Caco-2 (cell line): ENCODE measurements at regions of chr19 and their contacts with region 1.

Region 1: GRCh38 chr19:9796113-9796773 is 22.6 kb downstream of the FBXL12 start:
- DNase-seq: peak; percentile 84 to 85
- H3K4me3 ChIP-seq: no peak overlapping the region
- H3K4me3 Mint-ChIP-seq: no peak overlapping the region
- H3K27ac Mint-ChIP-seq: peak overlapping the region; percentile 22
- H3K4me1 ChIP-seq: no peaks in the 10 kb centered on the region; the same call in 1 of the 2 replicates
- H3K4me1 Mint-ChIP-seq: no peaks in the 10 kb centered on the region
- H3K27me3 ChIP-seq: no peaks in the 10 kb centered on the region
- H3K27me3 Mint-ChIP-seq: no peaks in the 10 kb centered on the region
- CTCF ChIP-seq: peak; percentile 70 to 73

Region 2: GRCh38 chr19:9140159-9140874 is 655.9 kb before region 1 on chr19 and contains the start of gene ZNF317:
- CTCF ChIA-PET with region 1: no interaction called
- POLR2A ChIA-PET with region 1: no interaction called
- intact Hi-C with region 1: loop called (anchors 1 kb)
- DNase-seq: peak; percentile 88 to 91
- H3K4me3 ChIP-seq: peak within 1 kb of the TSS; percentile 91
- H3K4me3 Mint-ChIP-seq: peak within 1 kb of the TSS; percentile 100
- H3K27ac Mint-ChIP-seq: peak within 1 kb of the TSS; percentile 100
- H3K4me1 ChIP-seq: 0 out of 2 replicates have a peak, but pooled peaks cover 7% of the 10 kb centered on the region
- H3K4me1 Mint-ChIP-seq: peaks cover 6% of the 10 kb centered on the region
- H3K27me3 ChIP-seq: no peaks in the 10 kb centered on the region
- H3K27me3 Mint-ChIP-seq: no peaks in the 10 kb centered on the region
- CTCF ChIP-seq: no peak
- total RNA-seq, gene ZNF317: 33.7 and 35.2 TPM in 2 replicates

Region 3: DNA sequence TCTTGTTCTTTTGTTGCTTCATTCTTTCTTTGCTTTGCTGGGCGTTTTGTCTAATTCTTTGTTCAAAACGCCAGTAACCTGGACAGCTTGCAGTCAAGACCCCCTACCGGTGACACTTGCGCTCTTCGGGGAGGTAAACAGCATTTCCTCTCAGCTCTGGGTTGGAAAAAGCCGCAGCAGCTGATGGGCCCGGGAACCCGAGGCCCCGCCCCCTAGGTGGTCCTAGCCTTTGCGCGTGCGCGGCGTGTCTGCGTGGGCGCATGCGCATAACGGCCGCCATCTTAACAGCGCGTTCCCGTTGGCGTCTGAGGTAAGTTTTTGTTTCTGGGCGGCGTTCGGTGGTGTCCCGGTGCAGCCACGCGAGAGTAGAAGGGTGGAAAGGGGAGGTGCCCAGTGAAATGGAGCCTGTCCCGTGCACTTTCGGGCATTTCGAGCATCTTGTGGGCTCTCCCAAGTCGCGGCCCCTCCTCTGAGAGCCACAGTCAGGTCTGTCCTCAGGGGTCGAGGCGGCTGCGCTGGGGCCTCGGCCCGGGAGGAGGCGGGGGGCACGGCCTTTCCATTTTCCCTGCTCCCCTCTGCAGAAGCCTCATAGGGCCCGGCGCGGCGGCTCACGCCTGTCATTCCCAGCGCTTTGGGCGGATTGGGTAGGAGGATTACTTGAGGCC is 472.2 kb before region 1 on chr19 and contains the start of gene ZNF559:
- CTCF ChIA-PET with region 1: no interaction called
- POLR2A ChIA-PET with region 1: no interaction called
- intact Hi-C with region 1: loop called (anchors 5 kb)
- DNase-seq: peak; percentile 88 to 91
- H3K4me3 ChIP-seq: peak within 1 kb of the TSS; percentile 44
- H3K4me3 Mint-ChIP-seq: peak within 1 kb of the TSS; percentile 80
- H3K27ac Mint-ChIP-seq: peak within 1 kb of the TSS; percentile 89
- H3K4me1 ChIP-seq: 0 out of 2 replicates have a peak, but pooled peaks cover 3% of the 10 kb centered on the region
- H3K4me1 Mint-ChIP-seq: no peaks in the 10 kb centered on the region
- H3K27me3 ChIP-seq: no peaks in the 10 kb centered on the region
- H3K27me3 Mint-ChIP-seq: no peaks in the 10 kb centered on the region
- CTCF ChIP-seq: peak in 1 of 2 experiments; percentile 28
- total RNA-seq, gene ZNF559: 5.4 and 5.5 TPM in 2 replicates

Region 4: DNA sequence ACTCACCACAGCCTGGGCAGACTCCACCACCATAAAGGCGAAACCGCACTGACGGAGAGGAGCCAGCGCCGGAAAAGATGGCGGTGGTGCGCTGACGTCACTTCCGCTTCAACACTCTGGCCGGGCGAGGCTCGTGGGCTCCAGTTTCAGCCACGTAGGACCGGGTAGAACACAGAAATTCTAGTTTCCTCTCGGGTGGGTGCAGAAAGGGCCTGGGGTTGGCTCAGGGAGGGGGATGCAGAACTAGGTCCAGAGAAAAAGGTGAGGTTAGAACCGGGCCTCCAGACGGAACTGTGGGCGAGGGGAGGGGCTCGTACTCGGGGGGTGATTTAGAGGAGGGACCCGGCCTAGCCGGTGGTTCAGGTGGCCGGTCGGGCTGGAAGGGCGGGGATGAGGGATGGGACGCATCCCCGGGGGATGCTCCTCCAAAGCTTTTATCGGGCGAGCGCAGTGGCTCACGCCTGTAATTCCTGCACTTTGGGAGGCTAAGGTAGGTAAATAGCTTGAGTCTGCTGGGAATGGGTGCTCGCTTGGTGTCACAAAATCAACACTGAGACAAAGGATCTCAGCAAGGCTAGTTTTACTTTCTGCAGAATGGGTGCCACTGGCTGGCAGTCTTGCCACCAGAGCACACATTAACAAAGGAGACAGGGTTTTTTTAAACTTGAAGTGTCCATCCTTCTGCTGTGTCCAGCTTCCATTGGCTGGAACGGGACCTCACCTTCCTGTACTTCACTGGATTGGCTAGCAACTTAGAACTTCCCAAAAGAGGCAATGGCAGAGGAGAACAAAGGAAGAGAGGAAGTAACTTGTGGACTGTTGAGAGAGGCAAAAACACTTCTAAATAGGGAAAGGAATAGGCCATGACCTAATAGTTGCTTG is 174.8 kb before region 1 on chr19 and contains the start of gene ZNF561:
- CTCF ChIA-PET with region 1: interaction called, 4 read pairs
- POLR2A ChIA-PET with region 1: no interaction called
- intact Hi-C with region 1: loop called (anchors 1 kb)
- DNase-seq: peak; percentile 80 to 84
- H3K4me3 ChIP-seq: peak within 1 kb of the TSS; percentile 71
- H3K4me3 Mint-ChIP-seq: peak within 1 kb of the TSS; percentile 96
- H3K27ac Mint-ChIP-seq: peak within 1 kb of the TSS; percentile 100
- H3K4me1 ChIP-seq: no peaks in the 10 kb centered on the region
- H3K4me1 Mint-ChIP-seq: peaks cover 7% of the 10 kb centered on the region
- H3K27me3 ChIP-seq: no peaks in the 10 kb centered on the region
- H3K27me3 Mint-ChIP-seq: no peaks in the 10 kb centered on the region
- CTCF ChIP-seq: no peak
- total RNA-seq, gene ZNF561: 23.7 and 27.4 TPM in 2 replicates

Region 5: DNA sequence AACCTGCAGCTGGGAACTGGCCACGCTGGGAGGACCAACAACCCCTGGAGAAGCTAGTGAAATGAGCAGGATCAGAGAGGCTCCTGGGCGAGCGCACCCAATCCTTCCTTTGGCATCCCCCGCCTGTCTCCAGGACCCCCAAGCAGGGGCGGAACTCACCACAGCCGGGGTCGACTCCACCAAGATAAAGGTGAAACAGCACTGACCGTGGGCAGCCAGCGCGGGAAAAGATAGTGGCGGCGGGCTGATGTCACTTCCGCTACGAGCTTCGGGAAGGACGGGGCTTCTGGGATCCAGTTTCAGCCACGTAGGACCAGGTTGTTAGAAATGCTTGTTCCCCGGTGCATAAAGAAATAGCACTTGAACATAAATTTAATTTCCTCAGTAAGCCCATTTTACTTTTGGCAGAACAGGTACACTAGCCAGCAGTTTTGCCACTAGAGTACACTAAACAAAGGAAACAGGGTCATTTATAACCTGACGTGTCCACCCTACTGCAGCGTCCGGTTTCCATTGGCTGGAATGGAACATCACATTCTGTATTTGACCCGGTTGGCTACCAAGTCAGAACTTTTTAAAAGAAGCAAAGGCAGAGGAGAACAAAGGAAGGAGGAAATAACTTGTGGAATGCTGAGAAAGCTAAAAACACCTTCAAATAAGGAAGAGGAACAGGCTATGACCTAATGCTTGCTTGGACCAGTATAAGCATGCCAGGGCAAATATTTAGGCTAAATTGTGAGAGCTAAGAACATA is 95.8 kb before region 1 on chr19:
- CTCF ChIA-PET with region 1: no interaction called
- POLR2A ChIA-PET with region 1: no interaction called
- intact Hi-C with region 1: no loop called
- DNase-seq: no peak
- H3K4me3 ChIP-seq: no peak overlapping the region
- H3K4me3 Mint-ChIP-seq: no peak overlapping the region
- H3K27ac Mint-ChIP-seq: no peak overlapping the region
- H3K4me1 ChIP-seq: 0 out of 2 replicates have a peak, but pooled peaks cover 5% of the 10 kb centered on the region
- H3K4me1 Mint-ChIP-seq: no peaks in the 10 kb centered on the region
- H3K27me3 ChIP-seq: no peaks in the 10 kb centered on the region
- H3K27me3 Mint-ChIP-seq: no peaks in the 10 kb centered on the region
- CTCF ChIP-seq: no peak

Region 6: DNA sequence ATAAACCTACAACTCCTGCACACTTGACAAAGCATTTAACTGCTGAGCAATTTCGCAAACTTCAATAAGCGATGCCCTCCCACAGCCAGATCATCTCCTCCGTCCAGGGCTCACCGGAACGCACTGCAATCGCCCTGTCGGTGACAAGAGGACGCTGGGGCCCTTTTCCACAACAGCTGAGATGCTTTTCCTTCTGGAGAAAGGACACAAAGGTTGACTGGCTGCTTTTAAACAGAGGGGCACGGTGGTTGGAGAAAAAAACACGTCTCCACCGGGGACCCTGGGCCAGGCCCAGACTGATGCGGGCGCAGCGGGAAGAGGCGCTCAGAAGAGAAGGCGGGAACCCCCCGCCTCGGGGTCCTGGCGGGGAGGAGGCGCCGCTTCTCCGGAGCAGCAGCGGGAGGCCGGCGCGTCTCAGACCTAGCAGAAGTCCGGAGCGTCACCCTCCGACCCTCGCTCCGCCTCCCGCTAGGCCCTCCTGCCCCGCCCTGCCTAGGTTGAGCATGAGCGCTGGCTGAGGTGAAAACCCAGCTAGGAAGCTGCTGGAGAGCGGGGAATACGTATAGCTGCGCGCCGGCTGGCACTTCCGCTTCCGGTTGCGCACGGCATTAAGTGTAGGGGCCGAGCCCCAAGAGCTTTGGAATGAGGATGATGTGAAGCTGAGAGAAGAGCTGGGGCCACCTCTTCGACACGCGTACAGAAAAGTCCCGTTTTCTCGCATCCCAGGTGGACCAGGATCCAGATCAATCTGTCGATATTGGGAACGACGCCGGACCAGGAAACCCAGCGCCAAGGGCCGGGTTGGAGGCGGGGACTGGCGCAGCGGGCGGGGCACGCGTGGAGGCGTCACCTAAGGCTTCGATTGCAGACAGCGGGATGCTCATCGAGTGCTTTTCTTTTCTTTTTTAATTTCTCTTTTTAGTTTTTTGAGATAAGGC is 27.8 kb before region 1 on chr19 and contains the start of gene ZNF846:
- CTCF ChIA-PET with region 1: no interaction called
- POLR2A ChIA-PET with region 1: interaction called, 3 read pairs
- intact Hi-C with region 1: loop called (anchors 1 kb)
- DNase-seq: peak; percentile 95 to 97
- H3K4me3 ChIP-seq: peak within 1 kb of the TSS; percentile 89
- H3K4me3 Mint-ChIP-seq: peak within 1 kb of the TSS; percentile 96
- H3K27ac Mint-ChIP-seq: peak within 1 kb of the TSS; percentile 96
- H3K4me1 ChIP-seq: no peaks in the 10 kb centered on the region
- H3K4me1 Mint-ChIP-seq: no peaks in the 10 kb centered on the region
- H3K27me3 ChIP-seq: no peaks in the 10 kb centered on the region
- H3K27me3 Mint-ChIP-seq: no peaks in the 10 kb centered on the region
- CTCF ChIP-seq: no peak
- total RNA-seq, gene ZNF846: 5.3 and 6.2 TPM in 2 replicates

Region 7: DNA sequence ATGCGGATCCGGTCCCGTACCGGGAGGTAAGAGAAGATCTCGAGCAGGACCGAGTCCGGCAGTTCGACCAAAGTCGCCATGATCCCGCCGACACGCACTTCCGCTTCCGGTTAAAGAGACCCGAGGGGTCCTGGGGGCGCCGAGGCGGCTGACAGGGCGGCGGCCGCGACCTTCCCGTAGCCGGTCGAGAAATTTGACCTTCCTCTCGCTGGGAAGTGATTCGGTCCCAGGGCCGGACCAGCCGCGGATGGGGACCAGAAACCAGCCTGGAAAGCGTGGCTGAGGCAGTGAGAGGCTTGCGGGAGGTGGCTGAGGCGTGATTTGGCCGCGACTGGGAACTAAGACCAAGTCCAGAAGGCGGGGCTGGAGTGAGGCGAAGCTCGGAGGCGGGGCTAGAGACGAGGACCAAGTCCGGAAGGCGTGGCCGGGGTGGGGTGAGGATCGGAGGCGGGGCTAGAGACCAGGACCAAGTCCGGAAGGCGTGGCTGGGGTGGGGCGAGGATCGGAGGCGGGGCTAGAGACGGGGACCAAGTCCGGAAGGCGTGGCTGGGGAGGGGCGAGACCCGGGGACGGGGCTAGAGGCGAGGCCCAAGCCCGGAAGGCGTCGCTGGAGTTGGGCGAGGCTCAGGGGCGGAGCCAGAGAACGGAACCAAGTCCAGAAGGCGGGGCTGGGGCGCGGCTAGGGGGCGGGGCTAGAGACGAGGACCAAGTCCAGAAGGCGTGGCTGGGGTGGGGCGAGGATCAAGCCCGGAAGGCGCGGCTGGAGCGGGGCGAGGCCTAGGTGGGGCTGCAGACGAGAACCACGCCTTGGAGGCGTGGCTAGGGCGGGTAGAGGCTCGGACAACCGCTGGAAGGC is 22.7 kb after region 1 on chr19 and contains the start of gene FBXL12:
- CTCF ChIA-PET with region 1: interaction called, 5 read pairs
- POLR2A ChIA-PET with region 1: no interaction called
- intact Hi-C with region 1: loop called (anchors 1 kb)
- DNase-seq: peak; percentile 99 to 100
- H3K4me3 ChIP-seq: peak within 1 kb of the TSS; percentile 73
- H3K4me3 Mint-ChIP-seq: peak within 1 kb of the TSS; percentile 90
- H3K27ac Mint-ChIP-seq: peak within 1 kb of the TSS; percentile 92
- H3K4me1 ChIP-seq: peaks cover 5% of the 10 kb centered on the region
- H3K4me1 Mint-ChIP-seq: peaks cover 5% of the 10 kb centered on the region
- H3K27me3 ChIP-seq: no peaks in the 10 kb centered on the region
- H3K27me3 Mint-ChIP-seq: no peaks in the 10 kb centered on the region
- CTCF ChIP-seq: no peak
- total RNA-seq, gene FBXL12: 37.6 and 39.9 TPM in 2 replicates

Region 8: GRCh38 chr19:9865732-9866501 is 69.7 kb after region 1 on chr19:
- CTCF ChIA-PET with region 1: no interaction called
- POLR2A ChIA-PET with region 1: no interaction called
- intact Hi-C with region 1: no loop called
- DNase-seq: no peak
- H3K4me3 ChIP-seq: no peak overlapping the region
- H3K4me3 Mint-ChIP-seq: no peak overlapping the region
- H3K27ac Mint-ChIP-seq: no peak overlapping the region
- H3K4me1 ChIP-seq: no peaks in the 10 kb centered on the region
- H3K4me1 Mint-ChIP-seq: no peaks in the 10 kb centered on the region
- H3K27me3 ChIP-seq: no peaks in the 10 kb centered on the region
- H3K27me3 Mint-ChIP-seq: peaks cover 3% of the 10 kb centered on the region
- CTCF ChIP-seq: no peak

Region 9: DNA sequence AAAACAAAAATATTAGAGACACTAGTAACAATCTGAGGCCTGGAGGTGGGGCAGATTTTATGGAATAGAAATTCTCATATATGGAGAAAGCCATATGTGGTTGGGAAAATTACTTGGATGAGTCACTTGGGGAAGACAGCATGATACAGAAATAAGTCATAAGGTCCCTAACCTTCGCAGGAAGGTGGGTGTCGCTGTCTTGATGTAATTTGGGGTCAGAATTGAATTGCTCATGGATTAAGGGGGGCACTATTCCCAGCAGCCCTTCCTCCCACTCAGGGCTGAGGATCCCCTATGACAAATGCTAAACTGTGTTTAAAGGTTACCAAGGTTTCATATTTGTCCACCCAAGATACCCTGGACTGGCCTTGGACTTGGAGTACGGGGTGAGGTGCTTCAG is 222.0 kb after region 1 on chr19:
- CTCF ChIA-PET with region 1: no interaction called
- POLR2A ChIA-PET with region 1: no interaction called
- intact Hi-C with region 1: no loop called
- DNase-seq: no peak
- H3K4me3 ChIP-seq: no peak overlapping the region
- H3K4me3 Mint-ChIP-seq: no peak overlapping the region
- H3K27ac Mint-ChIP-seq: no peak overlapping the region
- H3K4me1 ChIP-seq: no peaks in the 10 kb centered on the region
- H3K4me1 Mint-ChIP-seq: no peaks in the 10 kb centered on the region
- H3K27me3 ChIP-seq: no peaks in the 10 kb centered on the region; the same call in 1 of the 2 replicates
- H3K27me3 Mint-ChIP-seq: peaks cover 9% of the 10 kb centered on the region
- CTCF ChIP-seq: no peak